ENCODE measurements at regions of chr4 and their contacts with region 1.

Region 1: GRCh38 chr4:168831919-168832762 is 177.9 kb downstream of the CBR4 start:
- DNase-seq: peak; percentile 72
- H3K4me3 Mint-ChIP-seq: peak overlapping the region; percentile 77
- H3K27ac Mint-ChIP-seq: peak overlapping the region; percentile 66
- H3K4me1 Mint-ChIP-seq: peaks cover 8% of the 10 kb centered on the region
- H3K27me3 Mint-ChIP-seq: no peaks in the 10 kb centered on the region
- CTCF ChIP-seq: no peak

Region 2: DNA sequence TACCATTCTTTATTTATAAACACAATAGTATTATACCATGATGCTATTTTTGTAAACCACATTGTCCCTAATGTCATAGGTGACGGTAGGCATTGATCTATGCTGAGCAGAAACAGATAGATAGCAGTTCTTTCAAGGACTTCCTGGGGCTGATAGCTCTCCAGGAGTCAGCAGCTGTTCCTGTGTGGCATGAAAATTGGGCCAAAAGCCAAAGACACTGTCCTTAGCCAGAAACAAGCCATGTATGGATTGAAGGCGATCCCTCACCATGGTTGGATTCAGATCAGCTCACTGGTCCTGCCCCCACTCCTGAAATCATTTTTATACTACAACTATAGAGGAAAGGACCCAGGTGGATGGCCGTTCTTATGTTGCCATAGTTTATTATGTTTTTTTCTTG is 567.2 kb before region 1 on chr4:
- CTCF ChIA-PET with region 1: no interaction called
- intact Hi-C with region 1: no loop called
- DNase-seq: no peak
- H3K4me3 Mint-ChIP-seq: no peak overlapping the region
- H3K27ac Mint-ChIP-seq: no peak overlapping the region
- H3K4me1 Mint-ChIP-seq: no peaks in the 10 kb centered on the region
- H3K27me3 Mint-ChIP-seq: no peaks in the 10 kb centered on the region
- CTCF ChIP-seq: no peak

Region 3: GRCh38 chr4:168765726-168766125 is 66.4 kb before region 1 on chr4:
- CTCF ChIA-PET with region 1: no interaction called
- intact Hi-C with region 1: no loop called
- DNase-seq: peak; percentile 27
- H3K4me3 Mint-ChIP-seq: no peak overlapping the region
- H3K27ac Mint-ChIP-seq: no peak overlapping the region
- H3K4me1 Mint-ChIP-seq: peaks cover 34% of the 10 kb centered on the region
- H3K27me3 Mint-ChIP-seq: no peaks in the 10 kb centered on the region
- CTCF ChIP-seq: no peak

Region 4: DNA sequence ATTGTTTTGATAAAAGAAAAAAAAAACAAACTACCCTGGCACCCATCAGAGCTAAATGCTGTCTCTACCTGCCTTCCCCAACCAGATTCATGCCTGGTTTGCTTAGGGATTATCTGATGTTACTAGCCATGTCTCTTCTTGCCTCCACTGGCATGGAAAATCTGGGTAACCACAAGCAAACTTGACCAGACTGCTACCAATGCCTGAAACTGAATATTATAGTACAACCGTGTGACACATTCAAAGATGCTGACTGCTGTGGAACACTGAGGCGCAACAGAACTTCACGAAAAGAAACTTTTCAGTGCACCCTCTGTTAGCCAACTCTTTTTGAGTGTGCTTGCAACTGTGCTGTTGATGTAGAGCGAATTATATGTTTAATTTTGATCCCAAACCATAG is 50.2 kb before region 1 on chr4:
- CTCF ChIA-PET with region 1: no interaction called
- intact Hi-C with region 1: no loop called
- DNase-seq: no peak
- H3K4me3 Mint-ChIP-seq: no peak overlapping the region
- H3K27ac Mint-ChIP-seq: no peak overlapping the region
- H3K4me1 Mint-ChIP-seq: peaks cover 40% of the 10 kb centered on the region
- H3K27me3 Mint-ChIP-seq: no peaks in the 10 kb centered on the region
- CTCF ChIP-seq: no peak

Region 5: GRCh38 chr4:168815379-168816345 is 16.5 kb before region 1 on chr4:
- CTCF ChIA-PET with region 1: no interaction called
- intact Hi-C with region 1: loop called (anchors 2 kb)
- DNase-seq: no peak
- H3K4me3 Mint-ChIP-seq: no peak overlapping the region
- H3K27ac Mint-ChIP-seq: no peak overlapping the region
- H3K4me1 Mint-ChIP-seq: peaks cover 16% of the 10 kb centered on the region
- H3K27me3 Mint-ChIP-seq: no peaks in the 10 kb centered on the region
- CTCF ChIP-seq: no peak